RWPE1 (cell line): ENCODE measurements at regions of chr4 and their contacts with region 1.

Region 1: DNA sequence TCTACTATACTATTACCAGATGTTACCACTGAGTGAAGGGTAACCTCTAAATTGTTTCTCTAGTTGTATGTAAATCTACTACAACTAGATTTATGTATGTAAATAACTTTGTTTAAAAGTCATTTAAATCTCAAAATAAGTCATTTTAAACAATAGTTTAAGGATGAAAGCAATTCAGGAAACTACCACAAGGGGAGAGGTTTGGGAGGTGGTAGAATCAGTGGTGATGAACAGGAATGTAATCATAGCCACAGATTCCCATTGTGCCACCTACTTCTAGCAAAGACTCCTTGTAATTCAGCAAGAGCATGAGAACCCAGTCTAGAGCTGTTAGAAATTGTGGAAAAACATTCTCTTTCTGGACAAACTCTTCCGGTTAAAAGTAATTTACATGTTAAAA is 234.6 kb downstream of the SLC7A11 start:
- DNase-seq: no peak
- H3K27ac ChIP-seq: no peak overlapping the region
- CTCF ChIP-seq: no peak; the same call in 1 of the 2 replicates

Region 2: GRCh38 chr4:138053641-138054301 is 46.2 kb after region 1 on chr4:
- CTCF ChIA-PET with region 1: interaction called, 10 read pairs
- POLR2A ChIA-PET with region 1: no interaction called
- DNase-seq: peak; percentile 77
- H3K27ac ChIP-seq: peak overlapping the region; percentile 90
- CTCF ChIP-seq: no peak